K562 (cell line): ENCODE measurements at regions of chr10 and their contacts with region 1.

Region 1: GRCh38 chr10:89217057-89217990 is 10.2 kb upstream of the CH25H start:
- DNase-seq: peak in 3 of 4 experiments; percentile 10 to 56 (median 11)
- ATAC-seq: peak; percentile 39; the same call in 1 of the 3 replicates
- H3K4me3 ChIP-seq: no peak overlapping the region
- H3K27ac ChIP-seq: no peak overlapping the region
- H3K4me1 ChIP-seq: no peaks in the 10 kb centered on the region
- H3K27me3 ChIP-seq: peaks cover 0 to 4% of the 10 kb centered on the region in 2 experiments; a peak in 2 of 5 replicates
- CTCF ChIP-seq: peak; percentile 36 to 71 (median 56); a peak in 4 of 6 replicates
- EP300 ChIP-seq: no peak
- POLR2A ChIP-seq: no peak
- RAD21 ChIP-seq: peak; percentile 64 to 73

Region 2: GRCh38 chr10:88835096-88835909 is 382.0 kb before region 1 on chr10:
- CTCF ChIA-PET with region 1: interaction called, 3 read pairs
- POLR2A ChIA-PET with region 1: no interaction called
- in situ Hi-C with region 1: no loop called
- intact Hi-C with region 1: loop called (anchors 1 kb)
- DNase-seq: peak; percentile 44 to 72 (median 49)
- ATAC-seq: peak; percentile 97
- H3K4me3 ChIP-seq: no peak overlapping the region
- H3K27ac ChIP-seq: no peak overlapping the region
- H3K4me1 ChIP-seq: no peaks in the 10 kb centered on the region
- H3K27me3 ChIP-seq: no peaks in the 10 kb centered on the region
- CTCF ChIP-seq: peak; percentile 71 to 74 (median 73)
- EP300 ChIP-seq: no peak
- POLR2A ChIP-seq: no peak
- RAD21 ChIP-seq: peak; percentile 50 to 77

Region 3: GRCh38 chr10:88932539-88933256 is 284.6 kb before region 1 on chr10:
- CTCF ChIA-PET with region 1: interaction called, 42 read pairs
- POLR2A ChIA-PET with region 1: no interaction called
- in situ Hi-C with region 1: no loop called
- intact Hi-C with region 1: loop called (anchors 1 kb)
- DNase-seq: peak; percentile 19 to 35 (median 28)
- ATAC-seq: peak; percentile 83
- H3K4me3 ChIP-seq: no peak overlapping the region
- H3K27ac ChIP-seq: no peak overlapping the region
- H3K4me1 ChIP-seq: no peaks in the 10 kb centered on the region
- H3K27me3 ChIP-seq: no peaks in the 10 kb centered on the region
- CTCF ChIP-seq: peak; percentile 59 to 64 (median 62)
- EP300 ChIP-seq: no peak
- POLR2A ChIP-seq: no peak
- RAD21 ChIP-seq: peak; percentile 66 to 73

Region 4: GRCh38 chr10:89029785-89030437 is 187.4 kb before region 1 on chr10:
- CTCF ChIA-PET with region 1: interaction called, 19 read pairs
- POLR2A ChIA-PET with region 1: no interaction called
- in situ Hi-C with region 1: loop called (anchors 10 kb)
- intact Hi-C with region 1: loop called (anchors 1 kb)
- DNase-seq: peak; percentile 32 to 69 (median 38)
- ATAC-seq: peak; percentile 86
- H3K4me3 ChIP-seq: no peak overlapping the region
- H3K27ac ChIP-seq: no peak overlapping the region
- H3K4me1 ChIP-seq: no peaks in the 10 kb centered on the region; a peak in 1 of 5 replicates
- H3K27me3 ChIP-seq: no peaks in the 10 kb centered on the region
- CTCF ChIP-seq: peak; percentile 62 to 78 (median 69); a peak in 5 of 6 replicates
- EP300 ChIP-seq: no peak
- POLR2A ChIP-seq: no peak
- RAD21 ChIP-seq: peak; percentile 87 to 91

Region 5: DNA sequence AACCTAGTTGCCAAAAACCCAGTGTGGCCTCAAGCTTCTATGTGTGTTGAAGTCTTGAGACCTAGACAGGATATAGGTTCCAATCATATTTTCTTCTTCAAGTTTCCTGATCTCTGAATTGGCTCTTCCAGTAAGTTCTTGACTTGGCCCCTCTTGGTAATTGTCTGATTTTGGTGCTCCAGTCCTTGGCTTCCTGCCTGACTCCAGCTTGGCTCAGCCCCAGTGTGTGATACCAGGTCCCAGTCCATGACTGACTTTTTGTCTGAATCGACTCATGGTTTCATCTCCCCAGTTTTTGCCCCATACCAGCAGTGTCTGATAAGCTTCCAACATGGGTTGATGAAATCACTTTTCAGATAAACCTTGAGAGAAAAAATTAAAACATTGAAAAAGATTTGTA is 154.5 kb before region 1 on chr10:
- CTCF ChIA-PET with region 1: no interaction called
- POLR2A ChIA-PET with region 1: no interaction called
- in situ Hi-C with region 1: no loop called
- intact Hi-C with region 1: no loop called
- DNase-seq: peak in 1 of 4 experiments; percentile 9
- ATAC-seq: no peak
- H3K4me3 ChIP-seq: no peak overlapping the region
- H3K27ac ChIP-seq: peak overlapping the region; percentile 19; the same call in 1 of the 3 replicates
- H3K4me1 ChIP-seq: no peaks in the 10 kb centered on the region
- H3K27me3 ChIP-seq: no peaks in the 10 kb centered on the region
- CTCF ChIP-seq: no peak
- EP300 ChIP-seq: no peak
- POLR2A ChIP-seq: no peak
- RAD21 ChIP-seq: no peak

Region 6: GRCh38 chr10:89563861-89564478 is 346.6 kb after region 1 on chr10:
- CTCF ChIA-PET with region 1: interaction called, 5 read pairs
- POLR2A ChIA-PET with region 1: no interaction called
- in situ Hi-C with region 1: no loop called
- intact Hi-C with region 1: loop called (anchors 2 kb)
- DNase-seq: peak; percentile 20 to 34 (median 22)
- ATAC-seq: peak; percentile 78
- H3K4me3 ChIP-seq: no peak overlapping the region
- H3K27ac ChIP-seq: no peak overlapping the region
- H3K4me1 ChIP-seq: no peaks in the 10 kb centered on the region
- H3K27me3 ChIP-seq: peaks cover 0 to 4% of the 10 kb centered on the region in 2 experiments; a peak in 1 of 5 replicates
- CTCF ChIP-seq: peak; percentile 33 to 70 (median 43); a peak in 3 of 6 replicates
- EP300 ChIP-seq: no peak
- POLR2A ChIP-seq: no peak
- RAD21 ChIP-seq: peak; percentile 71 to 74